Mammary epithelial cell (primary cell): ENCODE measurements at regions of chr16 and their contacts with region 1.

Region 1: GRCh38 chr16:4700380-4700996 is 7.1 kb downstream of the NUDT16L1 start:
- DNase-seq: peak; percentile 73
- H3K4me3 ChIP-seq: no peak overlapping the region
- H3K27ac ChIP-seq: no peak overlapping the region
- H3K4me1 ChIP-seq: no peaks in the 10 kb centered on the region
- H3K27me3 ChIP-seq: no peaks in the 10 kb centered on the region
- CTCF ChIP-seq: no peak

Region 2: DNA sequence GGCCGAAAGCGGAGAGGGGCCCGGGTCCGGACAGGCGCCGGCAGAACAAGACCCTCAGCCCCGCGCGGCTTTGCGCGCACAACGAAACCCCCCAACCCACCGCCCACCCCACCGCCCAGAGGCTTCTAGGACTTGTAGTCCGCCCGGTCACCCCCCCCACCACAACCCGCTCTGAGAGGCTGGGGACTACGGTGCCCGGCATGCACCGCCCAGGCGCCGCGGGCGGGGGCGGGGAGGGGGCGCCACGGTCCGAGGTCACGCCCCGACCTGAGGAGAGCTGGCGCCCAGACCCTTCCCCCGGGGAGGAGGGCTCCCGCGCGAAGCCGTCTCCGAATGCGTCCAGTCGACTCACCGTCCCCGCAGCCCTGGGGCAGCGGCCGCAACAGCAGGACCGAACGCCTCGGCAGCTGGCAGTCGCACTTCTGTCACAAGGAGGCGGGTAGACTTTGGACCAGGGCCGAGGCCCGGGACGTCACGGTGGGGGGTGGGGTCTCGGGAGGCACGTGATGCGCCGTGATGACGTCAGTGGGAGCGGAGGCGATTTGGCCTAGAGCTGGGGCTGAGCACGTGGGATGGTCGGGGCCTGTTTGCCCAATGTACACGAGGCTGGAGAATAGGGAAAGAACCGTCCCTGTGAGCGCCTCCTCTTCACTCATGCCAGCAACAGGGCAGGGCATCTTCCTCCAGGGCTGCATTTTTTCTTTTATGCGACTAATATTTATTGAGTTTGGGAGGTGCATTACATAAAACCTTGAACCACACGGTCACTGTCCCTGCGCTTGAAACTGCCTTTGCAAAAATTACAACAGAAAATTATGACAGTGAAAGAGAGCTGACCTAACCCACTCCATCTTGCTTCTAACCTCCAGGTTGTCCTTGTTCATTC is 161.9 kb before region 1 on chr16 and contains the start of gene CDIP1:
- CTCF ChIA-PET with region 1: no interaction called
- dilution Hi-C with region 1: no loop called
- in situ Hi-C with region 1: no loop called
- intact Hi-C with region 1: no loop called
- DNase-seq: peak; percentile 95
- H3K4me3 ChIP-seq: peak within 1 kb of the TSS; percentile 80 to 84 (median 82)
- H3K27ac ChIP-seq: peak within 1 kb of the TSS; percentile 37
- H3K4me1 ChIP-seq: peaks cover 14% of the 10 kb centered on the region
- H3K27me3 ChIP-seq: no peaks in the 10 kb centered on the region
- CTCF ChIP-seq: peak in 1 of 2 donors; percentile 31
- total RNA-seq, gene CDIP1: 63.3 to 81.8 TPM

Region 3: DNA sequence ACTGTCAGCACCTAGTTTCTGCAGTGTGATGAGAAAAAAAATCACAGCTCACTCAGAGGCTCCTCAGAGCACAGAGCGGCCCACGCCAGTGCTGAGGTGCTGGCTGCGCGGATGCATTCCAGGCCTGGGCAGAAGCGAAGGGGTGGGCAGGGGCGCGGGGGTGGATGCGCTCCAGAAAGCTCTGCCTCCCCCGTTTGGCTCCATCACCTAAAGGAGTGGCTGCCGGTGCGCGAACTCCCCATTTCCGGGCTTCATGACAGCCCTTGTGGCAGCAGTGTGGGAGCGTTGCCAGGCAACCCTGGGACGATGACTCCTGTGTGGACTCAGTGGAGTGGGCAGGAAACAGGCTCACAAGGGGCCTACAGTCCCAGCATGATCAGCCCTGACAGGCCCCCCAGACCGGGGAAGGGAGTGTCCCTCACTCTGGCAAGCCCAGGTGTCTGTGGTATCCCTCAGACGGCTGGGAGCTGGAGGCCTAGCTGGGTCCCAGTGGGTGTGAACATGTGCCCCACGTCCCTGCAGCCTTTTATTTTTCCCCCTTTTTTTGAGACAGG is 40.0 kb before region 1 on chr16:
- CTCF ChIA-PET with region 1: no interaction called
- dilution Hi-C with region 1: loop called (anchors 5 kb)
- in situ Hi-C with region 1: no loop called
- intact Hi-C with region 1: no loop called
- DNase-seq: peak; percentile 70
- H3K4me3 ChIP-seq: no peak overlapping the region
- H3K27ac ChIP-seq: peak overlapping the region; percentile 44
- H3K4me1 ChIP-seq: peaks cover 51% of the 10 kb centered on the region
- H3K27me3 ChIP-seq: no peaks in the 10 kb centered on the region
- CTCF ChIP-seq: no peak

Region 4: DNA sequence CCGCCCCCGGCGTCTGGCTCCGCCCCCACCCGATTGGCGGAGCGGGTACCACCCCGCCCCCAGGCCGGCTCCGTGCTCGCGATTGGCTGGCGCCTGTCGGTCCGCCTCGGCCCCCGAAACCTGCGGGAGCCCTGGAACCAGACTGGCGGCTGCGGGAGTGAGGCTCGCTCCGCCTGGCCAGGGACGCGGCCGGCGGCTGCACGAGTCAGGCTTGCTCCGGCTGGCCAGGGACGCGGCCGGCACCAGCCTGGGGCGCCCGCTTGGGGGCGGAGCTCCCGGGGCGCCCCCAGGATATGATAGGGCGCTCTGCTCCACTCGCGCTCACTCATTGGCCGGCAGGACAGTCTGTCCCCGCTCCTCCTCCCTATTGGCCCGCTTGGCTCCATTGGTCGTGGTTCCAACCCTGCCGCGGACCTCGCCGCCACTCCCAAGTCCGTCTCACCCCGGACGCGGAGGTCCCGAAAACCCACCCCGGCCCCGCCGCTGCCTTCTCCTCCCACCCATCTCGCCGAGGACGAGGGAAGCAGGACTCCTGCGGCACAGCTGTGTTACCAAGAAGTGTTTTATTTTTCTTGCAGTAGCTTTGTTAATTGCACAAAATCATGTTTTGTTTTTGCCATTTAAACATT is 102.3 kb after region 1 on chr16:
- CTCF ChIA-PET with region 1: no interaction called
- dilution Hi-C with region 1: loop called (anchors 5 kb)
- in situ Hi-C with region 1: no loop called
- intact Hi-C with region 1: no loop called
- DNase-seq: peak; percentile 90
- H3K4me3 ChIP-seq: peak overlapping the region; percentile 73 to 80 (median 77)
- H3K27ac ChIP-seq: peak overlapping the region; percentile 53
- H3K4me1 ChIP-seq: peaks cover 26% of the 10 kb centered on the region
- H3K27me3 ChIP-seq: no peaks in the 10 kb centered on the region
- CTCF ChIP-seq: no peak

Region 5: DNA sequence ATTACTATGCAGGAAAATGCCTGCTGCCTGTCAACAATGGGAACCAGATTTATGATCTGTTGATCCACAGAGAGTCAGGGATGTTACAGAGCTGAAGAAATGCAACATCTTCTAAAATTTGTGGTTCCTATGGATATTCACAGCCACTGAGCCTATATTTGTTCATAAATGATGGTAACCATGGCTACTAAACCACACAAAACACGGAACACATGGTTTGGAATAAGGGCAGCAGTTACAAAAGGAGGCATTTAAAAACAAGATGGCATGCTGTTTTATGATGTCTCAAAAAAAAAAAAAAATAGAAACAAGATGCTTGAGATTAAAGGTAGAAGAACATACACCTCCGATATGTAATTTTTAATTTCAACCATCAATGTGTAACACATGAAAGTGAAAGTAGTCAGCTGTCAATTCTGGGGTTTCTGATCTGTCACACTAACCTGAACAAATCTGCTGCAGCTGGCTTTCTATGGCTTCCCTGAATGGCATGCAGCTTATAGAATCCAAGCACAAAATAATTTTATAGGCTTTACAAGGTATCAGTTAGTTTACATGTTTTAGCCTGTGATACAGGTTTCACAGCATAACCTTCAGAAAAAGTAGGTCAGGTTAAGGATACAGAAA is 133.0 kb after region 1 on chr16:
- CTCF ChIA-PET with region 1: no interaction called
- dilution Hi-C with region 1: loop called (anchors 5 kb)
- in situ Hi-C with region 1: no loop called
- intact Hi-C with region 1: no loop called
- DNase-seq: no peak
- H3K4me3 ChIP-seq: no peak overlapping the region
- H3K27ac ChIP-seq: no peak overlapping the region
- H3K4me1 ChIP-seq: no peaks in the 10 kb centered on the region
- H3K27me3 ChIP-seq: no peaks in the 10 kb centered on the region
- CTCF ChIP-seq: no peak